Activated B cell treated with CpG ODN at 0.5 μM for 24 hours (primary cell): ENCODE measurements at regions of chr14 and their contacts with region 1.

Region 1: DNA sequence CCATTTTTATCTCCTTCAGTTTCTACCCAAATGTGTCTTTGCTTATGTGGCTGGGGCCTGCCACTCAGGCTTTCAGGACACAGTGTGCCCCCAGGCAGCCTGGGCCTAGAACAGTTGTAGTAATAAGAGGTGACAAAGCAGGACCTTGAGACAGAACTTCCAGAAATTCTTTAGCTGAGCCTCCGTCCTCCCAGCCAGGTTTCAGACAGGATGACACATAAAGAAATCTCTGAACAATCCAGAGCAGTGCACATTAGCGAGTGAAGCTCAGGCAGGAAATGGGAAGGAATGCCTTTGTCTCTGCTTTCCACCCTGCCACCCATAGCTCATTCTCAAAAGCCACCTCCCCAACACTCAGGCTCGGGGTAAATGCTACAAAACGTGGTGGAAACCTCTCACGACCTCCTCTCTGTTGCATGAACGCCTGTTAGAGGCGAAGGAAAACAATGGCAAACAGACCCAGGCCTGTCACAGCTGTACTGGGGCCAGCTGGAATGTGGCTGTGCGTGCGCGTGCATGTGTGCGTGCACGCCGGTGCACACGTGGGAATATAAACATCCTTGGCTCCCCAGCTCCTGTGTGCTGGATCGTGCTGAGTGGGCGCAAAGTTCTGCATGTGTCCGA is 286.7 kb downstream of the ZFP36L1 start:
- DNase-seq: no peak
- ATAC-seq: peak; percentile 10
- H3K4me3 Mint-ChIP-seq: peak overlapping the region; percentile 62
- H3K27ac Mint-ChIP-seq: peak overlapping the region; percentile 98
- H3K4me1 Mint-ChIP-seq: peaks cover 87% of the 10 kb centered on the region
- H3K27me3 Mint-ChIP-seq: no peaks in the 10 kb centered on the region
- CTCF ChIP-seq: no peak

Region 2: GRCh38 chr14:68283378-68284123 is 222.6 kb before region 1 on chr14:
- CTCF ChIA-PET with region 1: interaction called, 10 read pairs
- POLR2A ChIA-PET with region 1: interaction called, 82 read pairs
- intact Hi-C with region 1: no loop called
- DNase-seq: peak; percentile 61
- ATAC-seq: peak; percentile 60
- H3K4me3 Mint-ChIP-seq: peak overlapping the region; percentile 58
- H3K27ac Mint-ChIP-seq: peak overlapping the region; percentile 99
- H3K4me1 Mint-ChIP-seq: peaks cover 97% of the 10 kb centered on the region
- H3K27me3 Mint-ChIP-seq: no peaks in the 10 kb centered on the region
- CTCF ChIP-seq: no peak

Region 3: GRCh38 chr14:68377459-68377858 is 128.7 kb before region 1 on chr14:
- CTCF ChIA-PET with region 1: no interaction called
- POLR2A ChIA-PET with region 1: interaction called, 17 read pairs
- intact Hi-C with region 1: loop called (anchors 2 kb)
- DNase-seq: no peak
- ATAC-seq: peak; percentile 43
- H3K4me3 Mint-ChIP-seq: peak overlapping the region; percentile 50
- H3K27ac Mint-ChIP-seq: peak overlapping the region; percentile 83
- H3K4me1 Mint-ChIP-seq: peaks cover 69% of the 10 kb centered on the region
- H3K27me3 Mint-ChIP-seq: no peaks in the 10 kb centered on the region
- CTCF ChIP-seq: no peak

Region 4: DNA sequence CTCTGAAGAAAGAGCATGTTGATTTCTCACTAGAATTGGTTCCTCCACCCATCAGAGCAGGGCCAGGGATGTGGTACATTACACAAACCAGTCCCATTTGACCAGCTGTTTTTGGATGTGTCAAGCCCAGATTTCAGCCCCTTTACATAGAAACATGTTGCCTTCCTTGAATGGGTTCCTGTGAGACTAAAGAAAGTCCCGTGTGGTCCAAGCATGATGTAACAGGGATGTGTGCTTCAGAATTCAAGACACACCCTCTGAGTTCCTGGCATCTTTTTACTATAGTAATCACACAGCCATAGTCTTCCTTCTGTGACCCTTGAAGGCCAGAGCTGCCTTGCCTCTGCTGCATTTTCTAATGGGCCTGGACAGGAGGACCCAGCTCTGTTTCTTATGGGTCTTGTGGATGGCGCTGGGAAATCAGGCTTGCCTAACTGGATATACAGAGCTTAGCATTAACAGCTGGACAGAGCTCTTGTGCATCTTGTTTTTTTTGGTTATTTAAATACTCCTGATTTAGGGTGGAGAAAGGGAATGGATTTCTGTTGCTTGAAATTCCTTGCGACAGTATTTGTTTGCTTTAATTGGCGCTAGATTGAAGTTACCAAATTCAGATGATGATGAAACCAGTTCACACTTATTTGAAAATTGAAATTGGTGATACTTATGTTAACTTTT is 54.3 kb before region 1 on chr14:
- CTCF ChIA-PET with region 1: no interaction called
- POLR2A ChIA-PET with region 1: interaction called, 13 read pairs
- intact Hi-C with region 1: no loop called
- DNase-seq: no peak
- ATAC-seq: no peak
- H3K4me3 Mint-ChIP-seq: no peak overlapping the region
- H3K27ac Mint-ChIP-seq: no peak overlapping the region
- H3K4me1 Mint-ChIP-seq: peaks cover 23% of the 10 kb centered on the region
- H3K27me3 Mint-ChIP-seq: no peaks in the 10 kb centered on the region
- CTCF ChIP-seq: no peak

Region 5: DNA sequence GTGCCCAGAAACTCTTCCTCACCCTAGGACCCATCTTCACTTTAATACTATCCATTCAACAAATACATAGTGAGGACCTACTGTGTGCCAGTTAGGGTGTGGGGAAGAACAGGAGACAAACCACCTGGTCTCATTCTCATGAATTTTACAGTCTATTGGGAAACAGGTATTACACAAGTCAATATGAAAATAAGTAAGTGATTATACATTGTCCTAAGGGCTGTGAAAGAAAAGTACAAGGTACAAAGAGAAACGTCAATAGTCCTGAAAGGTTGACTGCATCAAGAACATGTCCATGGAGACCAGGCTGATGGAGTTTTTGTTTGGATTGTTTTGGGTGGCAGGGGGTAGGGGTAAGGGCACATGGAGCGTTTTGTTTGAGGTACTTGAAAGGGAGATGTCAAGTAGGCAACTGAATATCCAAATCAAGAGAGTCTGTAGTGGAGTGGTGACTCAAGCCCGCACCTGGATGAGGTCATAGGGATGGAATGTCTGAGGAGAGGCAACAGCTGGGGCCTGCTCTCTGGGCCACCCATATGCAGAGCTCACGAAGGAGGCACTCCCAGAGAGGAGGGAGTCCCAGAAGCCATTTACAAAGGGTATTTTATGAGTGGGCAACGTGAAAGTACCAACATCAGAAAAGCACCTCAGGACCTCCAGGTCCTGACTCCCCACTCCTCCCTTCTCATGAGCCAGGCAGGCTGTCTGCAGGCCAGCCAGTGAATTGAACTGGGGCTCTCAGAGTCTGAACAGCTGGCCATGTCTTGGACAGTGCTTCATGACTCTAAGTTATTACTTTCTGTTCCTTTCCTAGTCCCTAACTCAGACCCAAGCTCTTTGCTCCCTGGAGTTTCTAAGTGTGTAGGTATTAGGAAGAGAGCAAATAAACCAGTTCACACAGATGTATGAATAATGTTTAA is 14.8 kb after region 1 on chr14:
- CTCF ChIA-PET with region 1: interaction called, 5 read pairs
- POLR2A ChIA-PET with region 1: interaction called, 74 read pairs
- intact Hi-C with region 1: no loop called
- DNase-seq: no peak
- ATAC-seq: no peak
- H3K4me3 Mint-ChIP-seq: no peak overlapping the region
- H3K27ac Mint-ChIP-seq: no peak overlapping the region
- H3K4me1 Mint-ChIP-seq: peaks cover 56% of the 10 kb centered on the region
- H3K27me3 Mint-ChIP-seq: no peaks in the 10 kb centered on the region
- CTCF ChIP-seq: no peak

Region 6: DNA sequence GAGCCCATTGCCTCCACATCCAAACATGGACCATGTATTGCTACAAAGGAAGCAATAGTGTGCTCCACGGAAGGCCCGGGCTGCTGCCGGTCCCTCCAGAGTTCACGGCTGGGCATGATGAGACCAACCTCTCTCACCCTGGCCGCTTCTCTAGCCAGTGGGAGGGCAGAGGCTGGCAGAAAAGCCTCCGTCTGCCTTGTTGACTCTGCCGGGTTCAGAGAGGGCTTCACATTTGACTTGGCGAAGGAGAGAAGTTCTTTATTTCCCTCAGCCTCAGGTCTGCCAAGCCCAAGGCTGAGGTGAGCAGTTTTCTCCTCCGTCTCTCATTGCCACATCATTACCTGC is 56.7 kb after region 1 on chr14:
- CTCF ChIA-PET with region 1: no interaction called
- POLR2A ChIA-PET with region 1: no interaction called
- intact Hi-C with region 1: no loop called
- DNase-seq: no peak
- ATAC-seq: no peak
- H3K4me3 Mint-ChIP-seq: peak overlapping the region; percentile 6
- H3K27ac Mint-ChIP-seq: no peak overlapping the region
- H3K4me1 Mint-ChIP-seq: peaks cover 26% of the 10 kb centered on the region
- H3K27me3 Mint-ChIP-seq: no peaks in the 10 kb centered on the region
- CTCF ChIP-seq: no peak

Region 7: GRCh38 chr14:68607081-68607886 is 101.2 kb after region 1 on chr14:
- CTCF ChIA-PET with region 1: no interaction called
- POLR2A ChIA-PET with region 1: no interaction called
- intact Hi-C with region 1: no loop called
- DNase-seq: no peak
- ATAC-seq: no peak
- H3K4me3 Mint-ChIP-seq: no peak overlapping the region
- H3K27ac Mint-ChIP-seq: peak overlapping the region; percentile 73
- H3K4me1 Mint-ChIP-seq: no peaks in the 10 kb centered on the region
- H3K27me3 Mint-ChIP-seq: no peaks in the 10 kb centered on the region
- CTCF ChIP-seq: no peak

Region 8: GRCh38 chr14:68685419-68686204 is 179.5 kb after region 1 on chr14:
- CTCF ChIA-PET with region 1: interaction called, 4 read pairs
- POLR2A ChIA-PET with region 1: interaction called, 149 read pairs
- intact Hi-C with region 1: loop called (anchors 1 kb)
- DNase-seq: peak; percentile 65
- ATAC-seq: peak; percentile 76
- H3K4me3 Mint-ChIP-seq: peak overlapping the region; percentile 73
- H3K27ac Mint-ChIP-seq: peak overlapping the region; percentile 97
- H3K4me1 Mint-ChIP-seq: peaks cover 87% of the 10 kb centered on the region
- H3K27me3 Mint-ChIP-seq: no peaks in the 10 kb centered on the region
- CTCF ChIP-seq: no peak

Region 9: GRCh38 chr14:69483765-69484443 is 977.8 kb after region 1 on chr14:
- CTCF ChIA-PET with region 1: no interaction called
- POLR2A ChIA-PET with region 1: no interaction called
- intact Hi-C with region 1: no loop called
- DNase-seq: no peak
- ATAC-seq: no peak
- H3K4me3 Mint-ChIP-seq: peak overlapping the region; percentile 44
- H3K27ac Mint-ChIP-seq: no peak overlapping the region
- H3K4me1 Mint-ChIP-seq: peaks cover 16% of the 10 kb centered on the region
- H3K27me3 Mint-ChIP-seq: peaks cover 48% of the 10 kb centered on the region
- CTCF ChIP-seq: no peak